Endothelial cell of umbilical vein (primary cell): ENCODE measurements at regions of chr4 and their contacts with region 1.

Region 1: DNA sequence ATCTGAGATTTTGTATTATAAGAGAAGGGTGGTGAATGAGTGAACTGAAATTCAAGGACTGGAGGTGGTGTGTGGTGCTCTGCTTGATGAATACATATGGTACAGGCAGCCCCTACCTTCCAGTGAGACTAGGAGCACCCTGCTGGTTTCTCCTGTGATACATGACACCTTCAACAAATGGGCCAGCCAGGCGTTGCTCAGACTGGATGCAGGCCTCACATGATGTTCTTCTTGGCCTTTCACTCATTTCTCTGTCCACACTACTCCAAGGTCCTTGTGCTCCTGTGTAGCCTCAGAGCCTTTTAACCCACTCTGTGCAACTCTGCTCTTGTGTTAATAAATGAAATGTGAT is 67.2 kb downstream of the FNIP2 start:
- DNase-seq: no peak
- H3K4me3 ChIP-seq: no peak overlapping the region
- H3K27ac ChIP-seq: no peak overlapping the region
- H3K4me1 ChIP-seq: no peaks in the 10 kb centered on the region
- H3K27me3 ChIP-seq: no peaks in the 10 kb centered on the region
- CTCF ChIP-seq: no peak
- POLR2A ChIP-seq: no peak

Region 2: DNA sequence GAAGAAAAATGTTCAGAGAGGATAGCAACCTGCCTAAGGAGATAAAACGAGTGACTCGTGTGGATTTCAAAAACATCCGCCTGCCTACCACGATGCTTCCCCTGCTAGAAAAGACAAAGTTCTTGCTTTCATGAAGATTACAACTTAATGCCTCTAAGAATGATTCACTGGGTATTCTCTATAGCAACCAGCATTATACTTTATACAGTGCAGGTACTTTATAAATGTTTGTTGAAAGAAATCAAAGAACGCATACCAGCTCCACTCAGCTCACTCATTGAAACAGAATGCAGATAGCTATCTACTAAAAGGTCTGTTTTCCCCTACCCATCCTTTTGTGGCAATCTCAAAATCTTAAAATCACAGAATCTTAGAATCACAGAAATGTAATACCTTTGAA is 696.9 kb before region 1 on chr4:
- CTCF ChIA-PET with region 1: no interaction called
- POLR2A ChIA-PET with region 1: no interaction called
- dilution Hi-C with region 1: no loop called
- intact Hi-C with region 1: no loop called
- DNase-seq: no peak
- H3K4me3 ChIP-seq: no peak overlapping the region
- H3K27ac ChIP-seq: no peak overlapping the region
- H3K4me1 ChIP-seq: no peaks in the 10 kb centered on the region
- H3K27me3 ChIP-seq: no peaks in the 10 kb centered on the region
- CTCF ChIP-seq: no peak
- POLR2A ChIP-seq: no peak

Region 3: DNA sequence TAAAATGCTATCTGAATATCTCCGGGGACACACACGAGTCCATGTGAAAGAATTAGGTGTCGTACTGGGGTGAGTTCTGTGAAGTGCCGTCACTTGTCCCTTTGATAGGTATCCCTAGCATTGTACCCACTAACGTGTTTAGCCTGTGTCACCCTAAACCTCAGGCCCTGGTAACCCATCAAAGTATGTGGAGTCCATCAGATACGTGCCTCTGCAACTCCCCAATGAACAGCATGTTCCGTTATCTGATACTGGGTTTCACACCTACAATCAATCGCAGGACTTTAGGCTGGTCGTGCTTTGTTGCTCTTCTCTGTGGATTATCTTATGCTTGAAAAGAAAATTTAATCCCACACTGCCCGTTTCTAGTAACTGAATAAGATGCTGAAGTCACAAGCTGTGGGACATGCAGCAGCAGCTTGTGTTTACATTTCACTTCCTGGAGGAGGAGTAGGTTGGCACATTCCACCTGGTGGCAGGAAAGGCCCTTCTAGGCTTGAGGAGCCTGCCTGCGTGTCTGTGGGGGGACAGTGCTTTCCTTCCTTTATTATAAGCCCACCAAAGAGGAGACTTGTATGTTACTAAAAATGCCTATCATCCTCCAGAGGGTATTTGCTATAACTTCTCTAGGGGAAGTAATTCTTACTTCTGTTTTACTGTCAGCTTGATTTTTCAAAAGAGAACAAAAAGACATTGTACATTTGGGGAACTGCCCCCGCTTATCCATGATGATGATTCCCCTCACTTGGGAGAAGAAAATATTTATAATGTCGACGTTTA is 60.0 kb after region 1 on chr4:
- CTCF ChIA-PET with region 1: no interaction called
- POLR2A ChIA-PET with region 1: no interaction called
- dilution Hi-C with region 1: no loop called
- intact Hi-C with region 1: no loop called
- DNase-seq: peak; percentile 49
- H3K4me3 ChIP-seq: peak overlapping the region in 1 of 3 experiments; percentile 1
- H3K27ac ChIP-seq: peak overlapping the region; percentile 56
- H3K4me1 ChIP-seq: peaks cover 11% of the 10 kb centered on the region
- H3K27me3 ChIP-seq: no peaks in the 10 kb centered on the region
- CTCF ChIP-seq: peak in 1 of 2 donors; percentile 15
- POLR2A ChIP-seq: no peak

Region 4: DNA sequence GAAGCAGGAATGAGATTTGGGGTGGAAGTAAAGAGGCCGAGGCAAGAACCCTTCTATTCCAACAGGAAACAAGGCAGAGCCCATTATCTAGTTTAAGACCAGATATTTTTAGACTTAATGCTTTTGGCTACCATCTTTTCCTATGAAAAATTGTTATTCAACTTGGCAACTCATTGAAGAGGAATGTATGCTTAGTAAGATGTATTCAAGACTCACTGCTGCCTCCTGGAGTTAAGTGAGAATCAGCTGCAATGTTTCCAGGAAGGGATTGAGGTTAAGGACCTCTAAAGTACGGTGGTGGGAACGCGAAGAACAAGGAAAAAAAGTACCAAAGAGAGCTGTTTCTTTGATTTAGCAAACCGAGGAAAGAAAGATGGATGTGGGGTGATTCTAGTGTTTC is 356.0 kb after region 1 on chr4:
- CTCF ChIA-PET with region 1: no interaction called
- POLR2A ChIA-PET with region 1: interaction called, 10 read pairs
- dilution Hi-C with region 1: no loop called
- intact Hi-C with region 1: no loop called
- DNase-seq: peak; percentile 31
- H3K4me3 ChIP-seq: no peak overlapping the region
- H3K27ac ChIP-seq: peak overlapping the region; percentile 24
- H3K4me1 ChIP-seq: peaks cover 21% of the 10 kb centered on the region
- H3K27me3 ChIP-seq: no peaks in the 10 kb centered on the region
- CTCF ChIP-seq: peak; percentile 13 to 38
- POLR2A ChIP-seq: no peak